Aorta (tissue), 5 donors: ENCODE measurements at regions of chr1 and their contacts with region 1.

Region 1: GRCh38 chr1:230268366-230269170 is 157.6 kb downstream of the PGBD5 start:
- DNase-seq: peak in 1 of 2 donors; percentile 68
- ATAC-seq: peak; percentile 57
- H3K4me3 ChIP-seq: no peak overlapping the region
- H3K27ac ChIP-seq: peak overlapping the region in 1 of 2 donors; percentile 11
- H3K4me1 ChIP-seq: no peaks in the 10 kb centered on the region
- H3K27me3 ChIP-seq: no peaks in the 10 kb centered on the region

Region 2: GRCh38 chr1:229572286-229572685 is 696.3 kb before region 1 on chr1:
- intact Hi-C with region 1: loop called in 1 of 2 experiments (anchors 5 kb)
- DNase-seq: no peak
- ATAC-seq: no peak
- H3K4me3 ChIP-seq: no peak overlapping the region
- H3K27ac ChIP-seq: no peak overlapping the region
- H3K4me1 ChIP-seq: peaks cover 0 to under 1% of the 10 kb centered on the region in 2 donors
- H3K27me3 ChIP-seq: no peaks in the 10 kb centered on the region

Region 3: DNA sequence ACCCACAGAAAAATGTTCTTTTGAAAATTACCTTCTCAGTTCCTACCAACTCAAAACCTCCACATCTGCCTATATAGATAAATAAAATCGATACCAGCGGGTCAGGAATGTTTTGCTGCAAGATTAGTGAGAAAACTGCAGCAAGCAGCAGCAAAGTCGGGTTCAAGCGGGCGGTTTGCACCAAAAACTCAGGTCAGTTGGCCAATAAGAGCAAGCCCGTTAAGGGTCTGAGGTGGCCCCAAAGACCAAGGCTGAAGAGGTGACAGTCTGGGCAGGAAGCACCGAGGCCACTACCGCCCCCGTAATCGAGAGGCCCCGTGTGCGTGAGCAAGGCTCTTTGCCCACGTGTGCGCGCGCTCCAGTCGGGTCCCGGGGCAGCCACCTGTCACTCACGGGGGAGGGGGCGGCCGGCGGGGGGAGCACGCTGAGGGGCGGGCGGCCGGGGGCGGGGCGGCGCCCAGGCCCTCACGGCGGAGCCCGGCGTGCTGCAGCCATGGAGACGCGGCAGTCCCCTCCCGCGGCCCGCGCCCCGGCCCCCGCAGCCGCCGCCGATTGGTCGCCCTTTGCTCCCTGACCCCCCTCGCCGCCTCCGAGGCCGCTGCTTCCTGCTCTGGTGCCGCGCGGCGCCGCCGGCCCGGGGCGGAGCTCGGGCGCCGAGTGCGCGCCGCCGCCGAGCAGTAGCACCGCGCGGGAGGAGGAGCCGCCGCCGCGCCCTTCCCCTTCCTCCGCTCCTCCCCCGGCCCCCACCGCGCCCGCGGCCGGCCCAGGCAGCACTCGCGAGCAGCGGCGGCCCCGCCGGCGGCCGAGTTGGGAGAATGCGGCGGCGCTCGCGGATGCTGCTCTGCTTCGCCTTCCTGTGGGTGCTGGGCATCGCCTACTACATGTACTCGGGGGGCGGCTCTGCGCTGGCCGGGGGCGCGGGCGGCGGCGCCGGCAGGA is 201.8 kb before region 1 on chr1 and contains the start of gene GALNT2:
- intact Hi-C with region 1: loop called (anchors 2 to 5 kb)
- DNase-seq: peak; percentile 93 to 96
- ATAC-seq: peak; percentile 94
- H3K4me3 ChIP-seq: peak within 1 kb of the TSS; percentile 77 to 96
- H3K27ac ChIP-seq: peak within 1 kb of the TSS; percentile 81 to 87
- H3K4me1 ChIP-seq: no peaks in the 10 kb centered on the region
- H3K27me3 ChIP-seq: no peaks in the 10 kb centered on the region
- total RNA-seq, gene GALNT2: 109 to 116 TPM

Region 4: GRCh38 chr1:230222678-230223077 is 45.9 kb before region 1 on chr1:
- intact Hi-C with region 1: loop called (anchors 5 kb)
- DNase-seq: no peak
- ATAC-seq: no peak
- H3K4me3 ChIP-seq: no peak overlapping the region
- H3K27ac ChIP-seq: peak overlapping the region in 1 of 2 donors; percentile 55
- H3K4me1 ChIP-seq: peaks cover 2 to 4% of the 10 kb centered on the region in 2 donors
- H3K27me3 ChIP-seq: no peaks in the 10 kb centered on the region

Region 5: DNA sequence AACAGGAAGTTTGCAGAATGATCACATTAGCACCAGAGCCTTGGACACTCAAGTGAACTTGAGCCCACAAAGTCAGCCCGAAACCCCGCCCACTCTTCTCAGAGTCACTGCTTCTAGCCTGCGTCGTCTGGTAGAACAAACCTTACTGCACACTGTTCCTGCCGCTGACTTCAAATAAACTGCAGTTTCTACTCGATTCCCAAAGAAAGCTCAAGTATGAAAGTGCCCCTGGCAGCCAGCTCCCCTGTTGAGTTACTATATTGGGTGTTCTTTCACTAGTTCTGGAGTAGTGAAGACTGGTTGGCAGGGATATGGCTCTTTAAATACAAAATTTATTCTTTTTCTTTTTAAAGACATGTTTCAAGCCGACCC is 36.8 kb before region 1 on chr1:
- intact Hi-C with region 1: loop called in 1 of 2 experiments (anchors 5 kb)
- DNase-seq: peak; percentile 87 to 89
- ATAC-seq: peak; percentile 89
- H3K4me3 ChIP-seq: peak overlapping the region; percentile 2 to 58
- H3K27ac ChIP-seq: peak overlapping the region; percentile 77 to 83
- H3K4me1 ChIP-seq: peaks cover 7 to 11% of the 10 kb centered on the region in 2 donors
- H3K27me3 ChIP-seq: no peaks in the 10 kb centered on the region

Region 6: DNA sequence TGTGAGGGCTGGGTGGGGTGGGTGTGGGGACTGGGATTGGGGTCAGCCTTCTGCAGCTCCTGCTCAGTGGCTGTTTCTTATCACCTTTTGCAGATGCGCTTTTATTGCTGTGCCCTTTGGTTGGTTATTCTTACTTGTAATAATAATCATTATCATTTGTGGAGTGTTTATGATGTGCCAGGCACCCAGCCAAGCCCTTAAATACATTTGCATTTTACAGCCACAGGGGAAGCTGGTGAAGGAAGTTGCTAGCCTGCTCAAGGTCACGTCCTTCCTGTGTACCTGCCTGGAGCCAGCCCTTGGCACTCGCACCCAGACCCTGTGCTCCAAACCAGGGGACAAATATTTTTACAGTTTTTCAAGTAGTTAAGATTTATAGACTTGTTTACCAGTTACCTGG is 13.6 kb after region 1 on chr1:
- intact Hi-C with region 1: no loop called
- DNase-seq: peak in 1 of 2 donors; percentile 39
- ATAC-seq: no peak
- H3K4me3 ChIP-seq: no peak overlapping the region
- H3K27ac ChIP-seq: no peak overlapping the region
- H3K4me1 ChIP-seq: peaks cover 0 to 3% of the 10 kb centered on the region in 2 donors
- H3K27me3 ChIP-seq: no peaks in the 10 kb centered on the region